GM18951 (cell line): ENCODE measurements at regions of chr10 and their contacts with region 1.

Region 1: DNA sequence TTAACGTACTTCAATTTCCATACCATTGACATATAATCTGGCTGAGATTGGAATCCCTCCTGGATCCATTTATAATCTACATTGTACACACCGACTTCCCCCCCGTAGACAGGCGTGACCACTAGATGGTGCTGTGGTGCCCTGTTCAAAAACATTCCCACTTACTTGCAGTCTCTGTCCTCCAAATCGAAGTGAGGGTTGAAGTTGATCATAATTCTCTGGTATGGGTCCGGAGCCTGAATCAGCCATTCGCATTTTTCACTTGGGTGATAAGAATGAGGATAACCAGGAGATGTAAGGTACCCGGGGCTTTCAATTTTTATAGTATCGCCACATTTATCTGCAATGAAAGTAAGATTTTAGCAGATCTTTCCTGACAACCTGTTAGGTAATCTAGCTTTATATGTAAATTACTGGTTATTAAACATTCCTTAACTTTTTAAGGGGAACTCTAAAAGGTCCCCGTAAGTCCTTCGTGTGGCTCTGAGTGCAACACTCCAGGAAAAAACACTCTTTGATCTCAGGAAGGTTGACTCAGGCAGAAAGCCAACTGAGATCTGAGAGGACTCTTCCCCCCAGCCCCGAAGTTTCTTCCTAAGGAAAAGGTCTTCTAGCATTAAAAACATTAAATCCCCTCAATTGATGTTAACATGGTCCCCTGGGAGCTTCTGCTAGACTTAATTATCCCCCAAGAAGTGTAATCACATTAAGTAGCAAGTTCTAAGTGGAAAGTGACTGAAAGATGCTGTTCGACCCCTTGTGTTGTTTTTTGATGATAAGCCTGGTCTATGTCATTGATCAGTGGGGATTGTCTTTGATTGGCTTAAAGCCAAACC is 3.7 kb downstream of the NRP1 start:
- POLR2A ChIP-seq: no peak

Region 2: DNA sequence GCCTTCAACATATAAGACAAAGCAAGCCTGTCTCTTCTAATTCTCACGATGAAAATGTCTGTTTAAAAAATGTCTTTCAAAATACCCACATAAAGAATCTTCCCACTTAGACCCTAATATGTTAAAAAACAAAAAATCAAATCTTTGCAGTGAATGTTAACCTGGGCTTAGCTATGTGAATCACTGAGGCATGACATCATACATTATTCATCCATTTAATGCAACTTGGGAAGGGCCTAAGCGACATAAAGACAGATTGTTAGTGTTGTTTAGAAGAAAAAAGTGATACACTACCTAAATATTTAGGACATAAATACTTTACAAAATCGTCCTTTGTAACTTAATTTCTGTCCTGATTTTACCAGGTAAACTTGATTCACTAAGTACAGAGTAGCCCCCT is 652.2 kb after region 1 on chr10:
- in situ Hi-C with region 1: no loop called
- POLR2A ChIP-seq: no peak

Region 3: GRCh38 chr10:34538281-34538829 is 1207.6 kb after region 1 on chr10:
- in situ Hi-C with region 1: loop called (anchors 10 kb)
- POLR2A ChIP-seq: no peak

Region 4: GRCh38 chr10:34647875-34648865 is 1317.4 kb after region 1 on chr10:
- in situ Hi-C with region 1: loop called (anchors 5 kb)
- POLR2A ChIP-seq: no peak